Vagina (tissue), 2 donors: ENCODE measurements at regions of chr7 and their contacts with region 1.

Region 1: GRCh38 chr7:44240983-44241510 is 40.3 kb downstream of the YKT6 start:
- DNase-seq: no peak
- H3K4me3 ChIP-seq: no peak overlapping the region
- H3K27ac ChIP-seq: no peak overlapping the region
- H3K4me1 ChIP-seq: peaks cover 4% of the 10 kb centered on the region
- H3K27me3 ChIP-seq: no peaks in the 10 kb centered on the region
- CTCF ChIP-seq: peak; percentile 26 to 63 (median 61)
- POLR2A ChIP-seq: no peak

Region 2: GRCh38 chr7:44477063-44477830 is 236.2 kb after region 1 on chr7:
- intact Hi-C with region 1: loop called (anchors 5 kb)
- DNase-seq: no peak
- H3K4me3 ChIP-seq: no peak overlapping the region
- H3K27ac ChIP-seq: no peak overlapping the region
- H3K4me1 ChIP-seq: peaks cover 19% of the 10 kb centered on the region
- H3K27me3 ChIP-seq: no peaks in the 10 kb centered on the region
- CTCF ChIP-seq: peak; percentile 62 to 76 (median 76)
- POLR2A ChIP-seq: no peak

Region 3: GRCh38 chr7:44561962-44562621 is 321.0 kb after region 1 on chr7:
- intact Hi-C with region 1: loop called (anchors 5 kb)
- DNase-seq: no peak
- H3K4me3 ChIP-seq: no peak overlapping the region
- H3K27ac ChIP-seq: no peak overlapping the region
- H3K4me1 ChIP-seq: no peaks in the 10 kb centered on the region
- H3K27me3 ChIP-seq: no peaks in the 10 kb centered on the region
- CTCF ChIP-seq: no peak
- POLR2A ChIP-seq: no peak

Region 4: DNA sequence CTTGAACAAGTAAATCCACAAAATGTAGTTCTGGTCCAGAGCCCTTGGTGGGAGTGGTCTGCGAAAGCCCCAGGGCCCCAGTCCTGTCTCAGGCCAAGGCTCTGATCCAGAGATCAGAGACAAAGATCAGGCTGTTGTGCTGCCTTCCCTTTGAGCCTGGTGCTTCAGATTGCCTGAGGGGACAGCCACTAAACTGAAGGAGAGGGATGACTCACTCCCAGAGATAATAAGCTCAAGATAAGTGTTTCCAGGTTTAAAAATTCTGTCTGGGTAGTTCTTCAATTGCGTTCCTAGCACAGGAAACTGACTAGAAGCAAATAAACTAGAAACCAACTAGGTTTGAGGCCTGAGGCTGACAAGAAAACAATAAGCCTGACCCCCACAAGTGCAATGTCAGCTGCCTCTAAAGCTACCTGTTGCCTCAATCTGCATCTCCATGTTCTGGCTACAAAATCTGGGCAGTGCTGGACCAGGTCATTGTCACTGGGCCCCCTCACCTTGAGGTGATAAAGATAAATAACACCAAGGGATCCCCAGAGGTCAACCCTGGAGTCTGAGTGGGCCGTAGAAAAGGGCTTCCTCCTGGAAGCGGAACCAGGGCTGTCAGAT is 1106.9 kb after region 1 on chr7:
- intact Hi-C with region 1: no loop called
- DNase-seq: no peak
- H3K4me3 ChIP-seq: no peak overlapping the region
- H3K27ac ChIP-seq: no peak overlapping the region
- H3K4me1 ChIP-seq: no peaks in the 10 kb centered on the region
- H3K27me3 ChIP-seq: no peaks in the 10 kb centered on the region
- CTCF ChIP-seq: no peak
- POLR2A ChIP-seq: no peak